ENCODE measurements at regions of chrX and their contacts with region 1.

Region 1: GRCh38 chrX:120228187-120228908 is 22.3 kb upstream of the ZBTB33 start:
- DNase-seq: no peak
- ATAC-seq: no peak
- H3K4me3 Mint-ChIP-seq: no peak overlapping the region
- H3K27ac Mint-ChIP-seq: no peak overlapping the region
- H3K4me1 Mint-ChIP-seq: no peaks in the 10 kb centered on the region
- H3K27me3 Mint-ChIP-seq: no peaks in the 10 kb centered on the region

Region 2: GRCh38 chrX:120213436-120214265 is 14.7 kb before region 1 on chrX:
- CTCF ChIA-PET with region 1: interaction called, 19 read pairs
- POLR2A ChIA-PET with region 1: no interaction called
- intact Hi-C with region 1: no loop called
- DNase-seq: peak; percentile 68
- ATAC-seq: peak; percentile 78
- H3K4me3 Mint-ChIP-seq: no peak overlapping the region
- H3K27ac Mint-ChIP-seq: no peak overlapping the region
- H3K4me1 Mint-ChIP-seq: peaks cover 6% of the 10 kb centered on the region
- H3K27me3 Mint-ChIP-seq: no peaks in the 10 kb centered on the region

Region 3: DNA sequence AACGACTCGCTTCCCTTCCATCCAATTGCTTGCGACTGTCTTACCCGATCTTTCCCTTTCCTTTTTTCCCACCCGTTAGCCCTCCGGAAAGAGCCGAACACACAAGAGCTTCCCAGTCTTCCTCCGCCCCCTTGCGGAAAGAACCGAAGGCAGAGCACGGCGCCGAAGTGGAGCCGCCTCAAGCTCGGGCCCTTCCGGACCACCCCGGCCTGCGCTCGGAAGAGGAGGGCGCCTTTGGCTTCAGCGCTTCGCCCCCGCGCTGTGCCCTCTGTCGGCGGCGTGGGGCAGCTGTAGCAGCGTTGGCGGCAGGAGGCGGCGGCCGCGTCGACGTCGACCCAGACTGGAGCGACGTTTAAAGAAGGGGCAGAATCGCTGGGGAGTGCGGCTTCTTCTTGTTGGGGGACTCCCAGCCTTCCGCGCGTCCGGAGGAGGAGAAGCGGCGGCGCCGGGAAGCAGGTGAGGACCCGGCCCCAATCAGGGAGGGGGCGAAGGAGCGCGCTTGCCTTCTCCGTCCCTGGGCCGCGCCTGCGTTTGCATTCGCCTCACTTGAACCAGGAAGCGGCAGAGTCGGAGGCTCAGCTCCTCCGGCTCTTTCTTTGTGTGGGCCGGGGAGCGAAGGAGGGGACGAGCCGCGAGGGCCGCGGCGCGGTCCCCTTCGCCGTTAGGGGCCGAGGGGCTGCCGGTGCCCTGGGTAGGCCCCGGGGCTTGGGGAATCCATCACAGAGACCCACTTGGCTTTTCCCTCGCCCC is 22.3 kb after region 1 on chrX and contains the start of gene ZBTB33:
- CTCF ChIA-PET with region 1: no interaction called
- POLR2A ChIA-PET with region 1: no interaction called
- intact Hi-C with region 1: no loop called
- DNase-seq: peak; percentile 92
- ATAC-seq: peak; percentile 99
- H3K4me3 Mint-ChIP-seq: peak within 1 kb of the TSS; percentile 94
- H3K27ac Mint-ChIP-seq: peak within 1 kb of the TSS; percentile 92
- H3K4me1 Mint-ChIP-seq: peaks cover 22% of the 10 kb centered on the region
- H3K27me3 Mint-ChIP-seq: no peaks in the 10 kb centered on the region
- total RNA-seq, gene ZBTB33: 14.5 to 14.6 TPM